HCT116 (cell line): ENCODE measurements at regions of chr4 and their contacts with region 1.

Region 1: DNA sequence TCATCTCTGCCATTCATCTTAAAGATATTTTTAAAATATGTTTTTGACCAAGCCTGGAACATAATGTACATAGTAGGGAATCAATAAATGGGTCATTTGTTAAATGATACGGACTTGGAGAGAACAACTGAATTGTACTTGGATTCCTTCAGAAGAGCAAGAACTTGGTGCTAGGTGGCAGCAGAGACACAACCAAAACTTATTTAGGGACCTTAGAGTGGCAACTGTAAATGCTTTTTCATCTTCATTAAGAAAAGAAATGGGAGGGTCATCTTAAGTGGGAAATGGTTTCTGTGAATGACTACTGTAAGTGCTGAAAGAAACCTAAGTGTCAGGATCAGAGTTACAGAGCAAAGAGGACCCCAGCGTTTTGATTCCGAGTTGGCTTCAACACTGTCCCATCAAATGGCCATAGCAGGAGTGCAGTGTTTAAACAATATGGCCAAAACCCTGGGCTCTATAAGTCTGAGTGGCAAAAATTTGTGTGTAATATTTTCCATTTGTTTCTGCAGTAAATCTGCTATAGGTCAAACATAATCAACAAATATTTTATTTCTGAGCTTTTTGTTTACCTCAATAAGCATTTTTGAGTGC is 213.6 kb downstream of the PALLD start:
- DNase-seq: peak; percentile 29
- ATAC-seq: peak; percentile 54; the same call in 1 of the 2 replicates
- H3K4me3 ChIP-seq: no peak overlapping the region
- H3K27ac ChIP-seq: no peak overlapping the region
- H3K4me1 ChIP-seq: peaks cover 0 to 11% of the 10 kb centered on the region in 2 experiments; a peak in 1 of 4 replicates
- H3K27me3 ChIP-seq: no peaks in the 10 kb centered on the region
- CTCF ChIP-seq: peak; percentile 46 to 54 (median 47); a peak in 5 of 6 replicates
- POLR2A ChIP-seq: no peak
- RAD21 ChIP-seq: peak; percentile 74

Region 2: DNA sequence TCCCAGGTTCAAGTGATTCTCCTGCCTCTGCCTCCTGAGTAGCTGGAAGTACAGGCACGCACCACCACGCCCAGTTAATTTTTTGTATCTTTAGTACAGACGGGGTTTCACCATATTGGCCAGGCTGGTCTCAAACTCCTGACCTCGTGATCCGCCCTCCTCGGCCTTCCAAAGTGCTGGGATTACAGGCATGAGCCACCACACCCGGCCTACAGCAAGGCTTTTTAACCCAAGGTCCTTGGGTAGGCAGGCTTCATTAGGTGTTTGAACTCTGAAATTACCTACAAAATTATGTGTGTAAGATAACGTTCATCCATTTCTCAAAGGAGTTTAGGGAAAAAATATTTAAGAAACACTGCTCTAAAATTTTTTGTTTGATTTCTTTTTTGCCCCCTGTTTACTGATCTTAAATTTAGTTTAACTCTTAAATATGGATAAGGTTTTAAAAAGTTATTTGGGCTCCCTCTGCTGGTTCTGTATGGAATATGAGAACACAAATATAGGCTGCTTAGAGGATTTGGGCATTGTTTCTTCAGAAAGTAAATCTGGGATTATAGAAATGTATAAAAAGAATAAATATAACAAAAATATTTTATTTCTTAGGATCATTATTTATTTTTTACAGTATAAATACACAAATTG is 206.8 kb after region 1 on chr4:
- CTCF ChIA-PET with region 1: interaction called, 6 read pairs
- POLR2A ChIA-PET with region 1: no interaction called
- RAD21 ChIA-PET with region 1: no interaction called
- intact Hi-C with region 1: loop called (anchors 1 kb)
- DNase-seq: peak; percentile 22
- ATAC-seq: peak; percentile 68
- H3K4me3 ChIP-seq: no peak overlapping the region
- H3K27ac ChIP-seq: peak overlapping the region; percentile 25; the same call in 1 of the 2 replicates
- H3K4me1 ChIP-seq: peaks cover 0 to 6% of the 10 kb centered on the region in 2 experiments; a peak in 2 of 4 replicates
- H3K27me3 ChIP-seq: no peaks in the 10 kb centered on the region
- CTCF ChIP-seq: peak; percentile 44 to 56 (median 54); a peak in 5 of 6 replicates
- POLR2A ChIP-seq: no peak
- RAD21 ChIP-seq: peak; percentile 76

Region 3: DNA sequence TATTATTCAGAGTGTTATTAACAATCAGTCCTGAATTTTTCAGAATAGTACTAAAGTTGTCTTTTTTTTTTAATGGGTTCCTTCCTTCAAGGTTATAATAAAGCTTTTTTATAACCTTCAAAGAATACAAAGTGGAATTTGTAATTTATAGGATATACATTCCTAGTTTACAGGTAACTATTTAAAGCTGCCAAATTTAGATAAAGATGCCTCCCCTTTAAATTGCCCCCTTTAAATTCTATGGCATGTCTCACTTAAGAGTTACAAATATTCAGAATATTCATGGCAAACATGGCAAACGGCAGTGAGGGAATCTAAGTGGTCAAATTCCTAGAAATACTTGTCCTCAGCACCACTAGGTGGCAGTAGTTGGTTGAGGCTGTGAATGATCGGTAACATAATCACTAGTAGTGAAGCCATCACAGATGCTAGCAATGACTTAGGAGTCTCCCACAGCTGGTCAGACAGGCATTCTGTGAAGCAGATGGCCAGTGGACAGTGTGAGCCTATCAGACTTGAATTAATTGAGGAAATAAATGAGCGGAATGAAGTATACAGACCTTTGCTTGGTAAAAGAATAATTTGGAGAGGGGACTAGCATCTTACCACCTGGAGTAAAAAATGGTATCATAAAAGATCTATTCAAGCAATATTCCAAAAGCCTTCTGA is 213.2 kb after region 1 on chr4:
- CTCF ChIA-PET with region 1: interaction called, 6 read pairs
- POLR2A ChIA-PET with region 1: no interaction called
- RAD21 ChIA-PET with region 1: no interaction called
- intact Hi-C with region 1: loop called (anchors 2 kb)
- DNase-seq: peak; percentile 61
- ATAC-seq: peak; percentile 84
- H3K4me3 ChIP-seq: no peak overlapping the region
- H3K27ac ChIP-seq: peak overlapping the region; percentile 17; the same call in 1 of the 2 replicates
- H3K4me1 ChIP-seq: no peaks in the 10 kb centered on the region
- H3K27me3 ChIP-seq: no peaks in the 10 kb centered on the region
- CTCF ChIP-seq: peak; percentile 63 to 83 (median 74)
- POLR2A ChIP-seq: no peak
- RAD21 ChIP-seq: peak; percentile 78